ENCODE measurements at regions of chr1 and their contacts with region 1.

Region 1: GRCh38 chr1:67149179-67149770 is 14.5 kb upstream of the C1orf141 start:
- DNase-seq: peak; percentile 81
- H3K4me3 ChIP-seq: no peak overlapping the region
- H3K27ac ChIP-seq: no peak overlapping the region
- H3K4me1 ChIP-seq: no peaks in the 10 kb centered on the region
- H3K27me3 ChIP-seq: no peaks in the 10 kb centered on the region
- CTCF ChIP-seq: peak; percentile 72

Region 2: GRCh38 chr1:66764994-66765578 is 384.2 kb before region 1 on chr1:
- CTCF ChIA-PET with region 1: interaction called, 17 read pairs
- POLR2A ChIA-PET with region 1: no interaction called
- intact Hi-C with region 1: loop called (anchors 2 kb)
- DNase-seq: peak; percentile 65
- H3K4me3 ChIP-seq: no peak overlapping the region
- H3K27ac ChIP-seq: no peak overlapping the region
- H3K4me1 ChIP-seq: no peaks in the 10 kb centered on the region
- H3K27me3 ChIP-seq: no peaks in the 10 kb centered on the region
- CTCF ChIP-seq: peak; percentile 81